ENCODE measurements at regions of chr12 and their contacts with region 1.

Region 1: GRCh38 chr12:6039894-6040568 is 84.4 kb downstream of the VWF start:
- DNase-seq: peak; percentile 57
- ATAC-seq: peak; percentile 85
- H3K4me3 ChIP-seq: no peak overlapping the region
- H3K27ac ChIP-seq: no peak overlapping the region
- H3K4me1 ChIP-seq: peaks cover 4 to 19% of the 10 kb centered on the region in 2 experiments; a peak in 3 of 4 replicates
- H3K27me3 ChIP-seq: no peaks in the 10 kb centered on the region
- CTCF ChIP-seq: peak; percentile 83 to 92 (median 89)
- POLR2A ChIP-seq: no peak
- RAD21 ChIP-seq: peak; percentile 93

Region 2: GRCh38 chr12:5912437-5913334 is 127.3 kb before region 1 on chr12:
- CTCF ChIA-PET with region 1: interaction called, 9 read pairs
- POLR2A ChIA-PET with region 1: no interaction called
- RAD21 ChIA-PET with region 1: no interaction called
- intact Hi-C with region 1: loop called (anchors 1 kb)
- DNase-seq: no peak
- ATAC-seq: peak; percentile 90
- H3K4me3 ChIP-seq: no peak overlapping the region
- H3K27ac ChIP-seq: no peak overlapping the region
- H3K4me1 ChIP-seq: no peaks in the 10 kb centered on the region
- H3K27me3 ChIP-seq: peaks cover 28% of the 10 kb centered on the region; the same call in 1 of the 2 replicates
- CTCF ChIP-seq: peak; percentile 71 to 91 (median 87)
- POLR2A ChIP-seq: no peak
- RAD21 ChIP-seq: peak; percentile 76

Region 3: DNA sequence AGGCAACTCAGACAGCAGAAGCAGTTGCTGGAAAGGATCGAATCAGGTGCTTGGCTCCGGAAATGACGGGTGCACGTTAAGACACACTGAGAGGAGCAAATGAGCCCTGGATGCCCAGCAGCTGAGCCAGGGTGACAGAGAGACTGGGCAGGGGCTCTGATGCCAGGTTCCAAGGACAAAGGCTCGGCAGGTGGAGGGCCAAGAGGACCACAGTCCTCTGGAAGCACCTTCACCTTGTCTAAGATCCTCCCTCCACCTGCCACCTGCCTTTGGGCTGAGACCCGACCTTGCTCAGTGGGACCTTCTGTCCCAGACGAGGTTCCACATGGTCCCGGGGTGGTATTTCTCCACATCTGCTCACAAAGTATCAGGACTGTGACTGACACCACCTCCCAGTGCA is 96.0 kb before region 1 on chr12:
- CTCF ChIA-PET with region 1: no interaction called
- POLR2A ChIA-PET with region 1: no interaction called
- RAD21 ChIA-PET with region 1: no interaction called
- intact Hi-C with region 1: no loop called
- DNase-seq: no peak
- ATAC-seq: no peak
- H3K4me3 ChIP-seq: no peak overlapping the region
- H3K27ac ChIP-seq: no peak overlapping the region
- H3K4me1 ChIP-seq: no peaks in the 10 kb centered on the region
- H3K27me3 ChIP-seq: peaks cover 12% of the 10 kb centered on the region; the same call in 1 of the 2 replicates
- CTCF ChIP-seq: no peak
- POLR2A ChIP-seq: no peak
- RAD21 ChIP-seq: no peak

Region 4: GRCh38 chr12:5965950-5966383 is 74.1 kb before region 1 on chr12:
- CTCF ChIA-PET with region 1: interaction called, 5 read pairs
- POLR2A ChIA-PET with region 1: no interaction called
- RAD21 ChIA-PET with region 1: interaction called in 1 of 2 experiments, 4 read pairs
- intact Hi-C with region 1: loop called (anchors 1 kb)
- DNase-seq: peak; percentile 28
- ATAC-seq: peak; percentile 99
- H3K4me3 ChIP-seq: no peak overlapping the region
- H3K27ac ChIP-seq: no peak overlapping the region
- H3K4me1 ChIP-seq: no peaks in the 10 kb centered on the region; a peak in 1 of 4 replicates
- H3K27me3 ChIP-seq: no peaks in the 10 kb centered on the region
- CTCF ChIP-seq: peak; percentile 58 to 90 (median 88); a peak in 5 of 6 replicates
- POLR2A ChIP-seq: no peak
- RAD21 ChIP-seq: peak; percentile 47

Region 5: DNA sequence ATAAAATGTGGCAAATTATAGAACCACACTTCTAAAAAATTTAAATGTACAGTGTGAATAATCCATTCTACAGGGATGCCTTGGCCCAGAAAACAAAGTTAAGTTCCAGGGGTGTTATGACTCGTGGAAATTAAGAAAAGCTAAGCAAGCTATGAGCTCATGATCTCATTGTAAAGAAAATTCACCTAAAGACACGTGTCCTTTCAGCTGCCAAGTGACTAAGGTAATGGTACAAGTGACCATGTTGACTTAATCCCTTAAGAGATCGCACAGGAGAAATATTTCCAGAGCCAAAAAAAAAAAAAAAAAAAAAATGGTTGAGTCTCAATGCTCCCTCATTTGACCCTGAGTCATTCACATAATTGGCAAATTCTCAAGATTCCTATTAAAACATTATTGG is 43.6 kb before region 1 on chr12:
- CTCF ChIA-PET with region 1: interaction called, 321 read pairs
- POLR2A ChIA-PET with region 1: no interaction called
- RAD21 ChIA-PET with region 1: no interaction called
- intact Hi-C with region 1: no loop called
- DNase-seq: no peak
- ATAC-seq: no peak
- H3K4me3 ChIP-seq: no peak overlapping the region
- H3K27ac ChIP-seq: no peak overlapping the region
- H3K4me1 ChIP-seq: no peaks in the 10 kb centered on the region
- H3K27me3 ChIP-seq: no peaks in the 10 kb centered on the region
- CTCF ChIP-seq: no peak
- POLR2A ChIP-seq: no peak
- RAD21 ChIP-seq: no peak

Region 6: DNA sequence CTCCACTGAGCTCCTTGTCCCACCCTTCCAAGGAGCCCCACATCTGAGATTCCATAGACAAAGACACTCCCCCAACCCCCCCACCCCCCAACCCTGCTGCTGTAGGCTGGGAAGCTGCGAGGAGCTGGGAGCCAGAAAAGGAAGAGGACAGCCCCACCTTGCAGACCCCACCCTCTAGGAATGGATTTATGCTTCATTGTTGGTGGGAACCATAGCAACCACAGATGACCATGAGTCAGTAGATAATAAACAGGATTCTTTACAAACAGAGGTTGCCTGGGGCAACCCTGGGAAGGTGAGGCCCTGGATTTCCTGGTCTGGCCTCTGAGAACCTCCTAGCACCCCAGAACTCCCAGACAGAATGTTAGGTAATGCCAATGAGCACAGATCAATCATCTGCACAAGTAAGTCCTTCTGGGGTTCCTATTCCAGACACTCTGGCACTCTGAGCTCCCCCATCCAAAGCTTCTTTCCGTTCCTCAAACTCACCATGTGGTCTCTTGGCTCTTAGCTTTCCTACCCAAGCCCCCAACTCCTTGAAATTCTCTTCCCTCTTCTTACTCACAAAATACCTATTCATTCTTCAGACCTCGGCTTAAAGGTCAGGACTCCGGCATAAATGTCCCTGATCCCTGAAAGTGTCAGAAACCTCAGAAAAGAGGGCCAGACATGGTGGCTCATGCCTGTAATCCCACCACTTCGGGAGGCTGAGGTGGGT is 255.2 kb after region 1 on chr12:
- CTCF ChIA-PET with region 1: no interaction called
- POLR2A ChIA-PET with region 1: no interaction called
- RAD21 ChIA-PET with region 1: no interaction called
- intact Hi-C with region 1: no loop called
- DNase-seq: peak; percentile 69
- ATAC-seq: peak; percentile 81
- H3K4me3 ChIP-seq: no peak overlapping the region
- H3K27ac ChIP-seq: no peak overlapping the region
- H3K4me1 ChIP-seq: peaks cover 12 to 38% of the 10 kb centered on the region in 2 experiments
- H3K27me3 ChIP-seq: no peaks in the 10 kb centered on the region
- CTCF ChIP-seq: no peak
- POLR2A ChIP-seq: no peak
- RAD21 ChIP-seq: no peak